Heart right ventricle (tissue), 16 donors: ENCODE measurements at regions of chr19 and their contacts with region 1.

Region 1: GRCh38 chr19:970695-971094 is 13.4 kb upstream of the WDR18 start:
- DNase-seq: no peak
- ATAC-seq: no peak
- H3K4me3 ChIP-seq: no peak overlapping the region
- H3K27ac ChIP-seq: no peak overlapping the region
- H3K4me1 ChIP-seq: no peaks in the 10 kb centered on the region
- H3K27me3 ChIP-seq: no peaks in the 10 kb centered on the region
- CTCF ChIP-seq: peak in 8 of 9 donors; percentile 14 to 49 (median 43)

Region 2: GRCh38 chr19:900302-901111 is 70.2 kb before region 1 on chr19:
- intact Hi-C with region 1: no loop called
- DNase-seq: no peak
- ATAC-seq: peak in 1 of 8 donors; percentile 13
- H3K4me3 ChIP-seq: no peak overlapping the region
- H3K27ac ChIP-seq: no peak overlapping the region
- H3K4me1 ChIP-seq: no peaks in the 10 kb centered on the region
- H3K27me3 ChIP-seq: no peaks in the 10 kb centered on the region
- CTCF ChIP-seq: no peak

Region 3: GRCh38 chr19:934865-935479 is 35.7 kb before region 1 on chr19:
- intact Hi-C with region 1: loop called in 1 of 10 experiments (anchors 5 kb)
- DNase-seq: peak; percentile 85 to 89
- ATAC-seq: peak; percentile 90 to 96 (median 92)
- H3K4me3 ChIP-seq: peak overlapping the region in 4 of 10 donors; percentile 4 to 16 (median 12)
- H3K27ac ChIP-seq: peak overlapping the region in 7 of 10 donors; percentile 46 to 79 (median 73)
- H3K4me1 ChIP-seq: peaks cover 28 to 47% (median 35%) of the 10 kb centered on the region in 9 donors
- H3K27me3 ChIP-seq: no peaks in the 10 kb centered on the region
- CTCF ChIP-seq: no peak